ENCODE measurements at regions of chr5 and their contacts with region 1.

Region 1: DNA sequence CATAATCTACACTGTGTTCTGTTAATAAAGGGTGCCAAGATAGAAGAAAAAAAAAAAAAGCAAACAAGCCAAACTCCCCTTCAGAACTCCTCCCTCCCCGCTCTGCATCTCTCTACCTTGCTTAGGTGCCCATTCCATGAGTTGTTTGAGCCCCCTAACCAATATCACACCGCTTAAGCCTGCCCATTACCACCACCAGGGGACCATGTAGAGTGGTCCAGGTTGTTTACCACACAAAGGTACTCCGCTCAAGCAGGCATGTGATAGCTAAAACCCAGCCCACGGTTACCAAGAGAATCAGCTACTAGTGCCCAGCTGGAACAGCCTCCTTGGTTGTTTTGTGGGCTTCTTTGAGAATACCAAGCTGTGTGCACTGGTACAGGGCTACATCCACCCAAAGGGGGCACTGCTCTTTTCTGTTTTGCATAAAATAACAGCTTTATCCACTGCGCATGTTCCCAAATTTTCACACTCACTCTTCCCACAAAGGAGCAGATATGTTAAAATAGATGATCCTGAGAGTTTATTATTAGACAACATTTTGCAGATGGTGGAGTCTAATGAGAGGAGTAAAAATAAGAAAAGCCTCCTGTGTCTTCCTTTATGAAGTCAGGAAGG is 304.1 kb downstream of the DEPDC1B start:
- DNase-seq: no peak
- CTCF ChIP-seq: no peak

Region 2: GRCh38 chr5:60382716-60383115 is 13.1 kb before region 1 on chr5:
- CTCF ChIA-PET with region 1: interaction called, 13 read pairs
- POLR2A ChIA-PET with region 1: no interaction called
- DNase-seq: peak; percentile 29
- CTCF ChIP-seq: peak; percentile 27

Region 3: GRCh38 chr5:60457233-60457632 is 61.4 kb after region 1 on chr5:
- CTCF ChIA-PET with region 1: no interaction called
- POLR2A ChIA-PET with region 1: no interaction called
- DNase-seq: no peak
- CTCF ChIP-seq: no peak